H1 (cell line): ENCODE measurements at regions of chr3 and their contacts with region 1.

Region 1: GRCh38 chr3:101809178-101810021 is 30.4 kb downstream of the NXPE3 start:
- DNase-seq: no peak
- H3K4me3 ChIP-seq: no peak overlapping the region
- H3K27ac ChIP-seq: no peak overlapping the region
- H3K4me1 ChIP-seq: no peaks in the 10 kb centered on the region
- H3K27me3 ChIP-seq: no peaks in the 10 kb centered on the region
- CTCF ChIP-seq: peak in 2 of 3 experiments; percentile 44 to 59; a peak in 2 of 4 replicates
- EP300 ChIP-seq: no peak
- POLR2A ChIP-seq: no peak
- RAD21 ChIP-seq: peak; percentile 75 to 82

Region 2: GRCh38 chr3:101744735-101745134 is 64.7 kb before region 1 on chr3:
- CTCF ChIA-PET with region 1: no interaction called
- POLR2A ChIA-PET with region 1: no interaction called
- DNase-seq: no peak
- H3K4me3 ChIP-seq: no peak overlapping the region
- H3K27ac ChIP-seq: no peak overlapping the region
- H3K4me1 ChIP-seq: no peaks in the 10 kb centered on the region
- H3K27me3 ChIP-seq: no peaks in the 10 kb centered on the region
- CTCF ChIP-seq: no peak
- EP300 ChIP-seq: no peak
- POLR2A ChIP-seq: no peak
- RAD21 ChIP-seq: no peak

Region 3: GRCh38 chr3:101827211-101828174 is 18.1 kb after region 1 on chr3:
- CTCF ChIA-PET with region 1: interaction called, 23 read pairs
- POLR2A ChIA-PET with region 1: interaction called, 5 read pairs
- DNase-seq: peak in 1 of 2 experiments; percentile 76
- H3K4me3 ChIP-seq: peak overlapping the region; percentile 52 to 70 (median 64)
- H3K27ac ChIP-seq: peak overlapping the region; percentile 64; the same call in 1 of the 2 replicates
- H3K4me1 ChIP-seq: peaks cover 0 to 8% (median 4%) of the 10 kb centered on the region in 4 experiments; a peak in 5 of 7 replicates
- H3K27me3 ChIP-seq: no peaks in the 10 kb centered on the region
- CTCF ChIP-seq: no peak
- EP300 ChIP-seq: no peak
- POLR2A ChIP-seq: peak in 1 of 2 experiments; percentile 87; a peak in 2 of 3 replicates
- RAD21 ChIP-seq: peak in 1 of 2 experiments; percentile 20; a peak in 3 of 4 replicates

Region 4: GRCh38 chr3:101842245-101842934 is 33.0 kb after region 1 on chr3:
- CTCF ChIA-PET with region 1: interaction called, 24 read pairs
- POLR2A ChIA-PET with region 1: interaction called, 5 read pairs
- DNase-seq: peak; percentile 52 to 87
- H3K4me3 ChIP-seq: no peak overlapping the region; a peak in 1 of 8 replicates
- H3K27ac ChIP-seq: peak overlapping the region; percentile 83
- H3K4me1 ChIP-seq: peaks cover 3 to 13% (median 8%) of the 10 kb centered on the region in 4 experiments; a peak in 5 of 7 replicates
- H3K27me3 ChIP-seq: no peaks in the 10 kb centered on the region
- CTCF ChIP-seq: no peak
- EP300 ChIP-seq: peak in 1 of 2 experiments; percentile 90; a peak in 1 of 3 replicates
- POLR2A ChIP-seq: no peak
- RAD21 ChIP-seq: no peak

Region 5: GRCh38 chr3:101854621-101855304 is 45.4 kb after region 1 on chr3:
- CTCF ChIA-PET with region 1: interaction called, 24 read pairs
- POLR2A ChIA-PET with region 1: interaction called, 14 read pairs
- DNase-seq: no peak
- H3K4me3 ChIP-seq: no peak overlapping the region
- H3K27ac ChIP-seq: no peak overlapping the region
- H3K4me1 ChIP-seq: no peaks in the 10 kb centered on the region
- H3K27me3 ChIP-seq: peaks cover 0 to 1% (median 0%) of the 10 kb centered on the region in 4 experiments; a peak in 1 of 7 replicates
- CTCF ChIP-seq: no peak
- EP300 ChIP-seq: no peak
- POLR2A ChIP-seq: no peak
- RAD21 ChIP-seq: no peak